Activated CD4-positive, alpha-beta T cell treated with anti-CD3 and anti-CD28 coated beads, Interleukin-2, amount 10 ng/mL, durations not matched to agents 24 days and 14 days (primary cell): ENCODE measurements at regions of chr2 and their contacts with region 1.

Region 1: GRCh38 chr2:171086352-171087290 is 74.1 kb downstream of the TLK1 start:
- DNase-seq: peak; percentile 84
- H3K4me3 Mint-ChIP-seq: peak overlapping the region; percentile 83
- H3K27ac Mint-ChIP-seq: peak overlapping the region; percentile 87
- H3K4me1 Mint-ChIP-seq: peaks cover 53% of the 10 kb centered on the region
- H3K27me3 Mint-ChIP-seq: no peaks in the 10 kb centered on the region

Region 2: GRCh38 chr2:171018522-171018921 is 68.1 kb before region 1 on chr2:
- intact Hi-C with region 1: loop called (anchors 2 kb)
- DNase-seq: no peak
- H3K4me3 Mint-ChIP-seq: no peak overlapping the region
- H3K27ac Mint-ChIP-seq: peak overlapping the region; percentile 46
- H3K4me1 Mint-ChIP-seq: peaks cover 11% of the 10 kb centered on the region
- H3K27me3 Mint-ChIP-seq: no peaks in the 10 kb centered on the region

Region 3: DNA sequence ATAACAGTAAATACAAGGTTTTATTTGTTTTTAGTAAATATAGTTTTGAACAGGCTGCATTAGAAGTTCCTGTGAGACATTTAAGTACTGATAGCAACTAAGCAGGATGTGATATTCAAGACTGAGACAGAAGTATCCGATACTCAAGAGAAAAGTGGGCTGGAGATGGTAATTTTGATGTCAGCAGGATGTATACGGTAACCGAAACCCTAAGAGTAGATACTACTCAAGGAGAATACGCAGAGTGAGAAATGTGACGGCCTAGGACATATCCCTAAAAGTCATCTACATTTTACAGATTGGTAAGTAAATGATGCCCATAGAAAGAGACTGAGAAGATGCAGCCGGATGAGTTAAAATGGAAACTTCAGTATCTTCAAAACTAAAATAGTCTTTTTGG is 42.2 kb before region 1 on chr2:
- intact Hi-C with region 1: loop called (anchors 1 kb)
- DNase-seq: no peak
- H3K4me3 Mint-ChIP-seq: no peak overlapping the region
- H3K27ac Mint-ChIP-seq: peak overlapping the region; percentile 68
- H3K4me1 Mint-ChIP-seq: peaks cover 24% of the 10 kb centered on the region
- H3K27me3 Mint-ChIP-seq: no peaks in the 10 kb centered on the region

Region 4: GRCh38 chr2:171102802-171103201 is 16.2 kb after region 1 on chr2:
- intact Hi-C with region 1: no loop called
- DNase-seq: no peak
- H3K4me3 Mint-ChIP-seq: no peak overlapping the region
- H3K27ac Mint-ChIP-seq: no peak overlapping the region
- H3K4me1 Mint-ChIP-seq: peaks cover 21% of the 10 kb centered on the region
- H3K27me3 Mint-ChIP-seq: no peaks in the 10 kb centered on the region

Region 5: DNA sequence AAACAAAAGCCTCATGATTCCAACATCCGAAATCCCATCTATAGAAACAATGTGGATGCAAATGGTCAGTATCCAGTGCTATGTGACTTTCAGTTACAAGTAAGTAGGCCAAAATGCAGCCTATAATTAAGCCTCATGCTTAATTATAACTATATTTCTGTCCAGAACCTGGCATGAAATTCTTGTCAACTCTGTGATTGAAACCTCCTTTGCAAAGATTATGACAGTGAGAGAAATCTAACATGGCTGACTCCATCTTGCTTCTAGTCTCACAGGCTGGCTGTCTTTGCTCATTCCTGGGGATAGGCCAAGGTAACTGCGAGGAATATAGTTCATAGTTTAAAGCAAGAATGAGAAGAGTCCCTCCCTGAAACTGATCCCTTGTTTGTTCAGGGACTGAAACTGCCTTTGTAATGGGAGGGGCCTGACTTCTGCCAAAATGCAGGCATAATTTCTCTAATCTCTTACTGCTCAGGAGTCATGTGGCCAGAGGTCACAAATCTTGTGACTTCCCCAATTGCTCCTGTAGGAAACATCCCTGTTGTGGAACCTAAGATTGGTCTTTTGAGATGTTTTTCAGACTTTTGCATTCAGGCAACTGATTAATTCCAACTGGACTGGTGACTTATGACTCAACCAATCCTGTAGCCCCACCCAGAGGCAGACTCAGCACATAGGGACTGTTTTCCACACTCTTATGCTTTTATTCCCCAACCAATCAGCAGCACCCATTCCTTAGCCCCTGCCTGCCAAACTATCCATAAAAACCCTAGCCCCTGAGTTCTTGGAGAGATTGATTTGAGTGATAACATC is 158.6 kb after region 1 on chr2:
- intact Hi-C with region 1: loop called (anchors 10 kb)
- DNase-seq: no peak
- H3K4me3 Mint-ChIP-seq: no peak overlapping the region
- H3K27ac Mint-ChIP-seq: no peak overlapping the region
- H3K4me1 Mint-ChIP-seq: peaks cover 43% of the 10 kb centered on the region
- H3K27me3 Mint-ChIP-seq: no peaks in the 10 kb centered on the region

Region 6: GRCh38 chr2:171330155-171330956 is 243.7 kb after region 1 on chr2:
- intact Hi-C with region 1: no loop called
- DNase-seq: no peak
- H3K4me3 Mint-ChIP-seq: no peak overlapping the region
- H3K27ac Mint-ChIP-seq: no peak overlapping the region
- H3K4me1 Mint-ChIP-seq: peaks cover 30% of the 10 kb centered on the region
- H3K27me3 Mint-ChIP-seq: no peaks in the 10 kb centered on the region

Region 7: GRCh38 chr2:171433763-171434670 is 347.4 kb after region 1 on chr2 and contains the starts of genes DCAF17 and METTL8:
- intact Hi-C with region 1: loop called (anchors 2 kb)
- DNase-seq: peak; percentile 98
- H3K4me3 Mint-ChIP-seq: peak within 1 kb of the TSS; percentile 82
- H3K27ac Mint-ChIP-seq: peak within 1 kb of the TSS; percentile 88
- H3K4me1 Mint-ChIP-seq: peaks cover 23% of the 10 kb centered on the region
- H3K27me3 Mint-ChIP-seq: no peaks in the 10 kb centered on the region
- total RNA-seq, gene DCAF17: 27.3 and 27.4 TPM in 2 replicates
- total RNA-seq, gene METTL8: 33.1 and 42.9 TPM in 2 replicates